Activated T-helper 2 cell treated with anti-CD3 and anti-CD28 coated beads, Interferon-gamma antibody, Interleukin-2, Interleukin-4, amounts not matched to agents 10 μg/mL and 5 μg/mL and 100 μg/mL, durations not matched to agents 14 hours and 24 hours and 36 hours (primary cell): ENCODE measurements at regions of chr4 and their contacts with region 1.

Region 1: GRCh38 chr4:139416073-139416673 is 37.7 kb upstream of the RAB33B start:
- DNase-seq: no peak
- H3K4me3 Mint-ChIP-seq: no peak overlapping the region
- H3K27ac Mint-ChIP-seq: no peak overlapping the region
- H3K4me1 Mint-ChIP-seq: peaks cover 8% of the 10 kb centered on the region
- H3K27me3 Mint-ChIP-seq: no peaks in the 10 kb centered on the region

Region 2: GRCh38 chr4:138334346-138335016 is 1081.7 kb before region 1 on chr4:
- intact Hi-C with region 1: no loop called
- DNase-seq: no peak
- H3K4me3 Mint-ChIP-seq: no peak overlapping the region
- H3K27ac Mint-ChIP-seq: no peak overlapping the region
- H3K4me1 Mint-ChIP-seq: no peaks in the 10 kb centered on the region
- H3K27me3 Mint-ChIP-seq: no peaks in the 10 kb centered on the region

Region 3: GRCh38 chr4:139530833-139531427 is 114.8 kb after region 1 on chr4:
- intact Hi-C with region 1: loop called (anchors 1 kb)
- DNase-seq: peak; percentile 24
- H3K4me3 Mint-ChIP-seq: no peak overlapping the region
- H3K27ac Mint-ChIP-seq: no peak overlapping the region
- H3K4me1 Mint-ChIP-seq: peaks cover 8% of the 10 kb centered on the region
- H3K27me3 Mint-ChIP-seq: no peaks in the 10 kb centered on the region